Aorta (tissue), 5 donors: ENCODE measurements at regions of chr10 and their contacts with region 1.

Region 1: DNA sequence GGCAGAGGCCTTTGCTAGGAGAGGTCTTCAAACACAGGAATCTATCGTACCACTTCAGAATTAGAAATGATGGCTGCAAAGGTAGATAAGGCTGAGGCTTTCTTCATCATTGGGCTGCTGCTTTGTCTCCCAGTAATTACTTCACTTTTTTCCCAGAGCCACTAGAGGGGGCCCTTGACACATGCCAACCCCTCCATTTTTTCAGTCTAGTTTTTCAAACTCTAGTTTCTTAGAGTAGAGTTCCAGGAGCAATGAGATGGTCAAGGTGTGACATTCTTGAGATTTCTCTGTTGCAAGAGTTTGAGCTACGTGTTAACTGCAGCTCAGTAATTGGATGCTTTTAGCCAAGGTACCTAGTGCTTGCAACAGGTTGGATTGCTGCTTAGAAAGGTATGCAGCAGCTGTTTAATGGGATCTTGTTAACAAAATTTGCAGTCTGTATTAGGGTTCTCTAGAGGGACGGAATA is 33.8 kb upstream of the RBM20 start:
- DNase-seq: no peak
- ATAC-seq: peak; percentile 67
- H3K4me3 ChIP-seq: no peak overlapping the region
- H3K27ac ChIP-seq: no peak overlapping the region
- H3K4me1 ChIP-seq: no peaks in the 10 kb centered on the region
- H3K27me3 ChIP-seq: no peaks in the 10 kb centered on the region

Region 2: DNA sequence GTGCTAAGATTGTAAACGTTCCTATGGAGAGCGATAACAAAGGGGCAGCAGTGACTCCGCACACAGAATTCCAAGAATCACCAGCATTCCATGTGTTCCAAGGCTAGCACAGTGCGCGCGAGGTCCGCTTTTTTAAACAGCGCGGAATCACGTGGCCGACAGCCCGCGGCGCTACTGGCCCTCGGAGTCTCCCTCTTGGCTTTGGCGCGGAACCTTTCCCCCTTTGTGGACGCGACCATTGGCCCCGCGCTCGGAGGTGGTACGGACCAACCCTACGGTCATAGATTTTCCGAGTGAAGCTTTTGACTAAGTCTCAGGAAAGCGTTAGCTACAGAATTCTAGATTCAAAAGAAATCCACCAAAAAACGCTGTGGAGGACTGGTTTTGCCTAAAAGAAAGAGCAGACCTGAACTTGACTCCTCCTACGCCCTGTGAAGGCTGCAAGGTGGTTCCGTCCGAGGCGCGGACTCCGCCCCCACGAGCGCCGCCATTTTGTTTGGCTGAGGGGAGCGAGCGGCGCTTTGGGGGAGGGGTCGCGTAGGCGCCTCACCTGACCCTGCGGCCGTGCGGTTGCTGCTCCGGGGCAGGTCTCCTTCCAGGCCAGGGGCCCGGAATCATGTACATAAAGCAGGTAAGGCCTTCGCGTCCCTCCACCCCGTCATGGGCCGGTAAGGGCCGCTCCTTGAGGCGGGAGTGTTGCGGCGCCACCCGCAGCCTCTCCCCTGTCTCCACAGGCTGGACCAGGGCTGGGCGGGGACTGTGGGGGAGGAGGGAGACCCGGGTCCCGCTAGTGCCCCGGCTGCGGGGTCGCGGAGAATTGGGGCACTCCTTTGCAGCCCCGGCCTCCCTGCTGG is 42.9 kb before region 1 on chr10 and contains the start of gene SMC3:
- intact Hi-C with region 1: no loop called
- DNase-seq: peak; percentile 95 to 97
- ATAC-seq: peak; percentile 98
- H3K4me3 ChIP-seq: peak within 1 kb of the TSS; percentile 76 to 99
- H3K27ac ChIP-seq: peak within 1 kb of the TSS in 1 of 2 donors; percentile 12
- H3K4me1 ChIP-seq: peaks cover 0 to 2% of the 10 kb centered on the region in 2 donors
- H3K27me3 ChIP-seq: no peaks in the 10 kb centered on the region
- total RNA-seq, gene SMC3: 33.1 to 35.8 TPM

Region 3: DNA sequence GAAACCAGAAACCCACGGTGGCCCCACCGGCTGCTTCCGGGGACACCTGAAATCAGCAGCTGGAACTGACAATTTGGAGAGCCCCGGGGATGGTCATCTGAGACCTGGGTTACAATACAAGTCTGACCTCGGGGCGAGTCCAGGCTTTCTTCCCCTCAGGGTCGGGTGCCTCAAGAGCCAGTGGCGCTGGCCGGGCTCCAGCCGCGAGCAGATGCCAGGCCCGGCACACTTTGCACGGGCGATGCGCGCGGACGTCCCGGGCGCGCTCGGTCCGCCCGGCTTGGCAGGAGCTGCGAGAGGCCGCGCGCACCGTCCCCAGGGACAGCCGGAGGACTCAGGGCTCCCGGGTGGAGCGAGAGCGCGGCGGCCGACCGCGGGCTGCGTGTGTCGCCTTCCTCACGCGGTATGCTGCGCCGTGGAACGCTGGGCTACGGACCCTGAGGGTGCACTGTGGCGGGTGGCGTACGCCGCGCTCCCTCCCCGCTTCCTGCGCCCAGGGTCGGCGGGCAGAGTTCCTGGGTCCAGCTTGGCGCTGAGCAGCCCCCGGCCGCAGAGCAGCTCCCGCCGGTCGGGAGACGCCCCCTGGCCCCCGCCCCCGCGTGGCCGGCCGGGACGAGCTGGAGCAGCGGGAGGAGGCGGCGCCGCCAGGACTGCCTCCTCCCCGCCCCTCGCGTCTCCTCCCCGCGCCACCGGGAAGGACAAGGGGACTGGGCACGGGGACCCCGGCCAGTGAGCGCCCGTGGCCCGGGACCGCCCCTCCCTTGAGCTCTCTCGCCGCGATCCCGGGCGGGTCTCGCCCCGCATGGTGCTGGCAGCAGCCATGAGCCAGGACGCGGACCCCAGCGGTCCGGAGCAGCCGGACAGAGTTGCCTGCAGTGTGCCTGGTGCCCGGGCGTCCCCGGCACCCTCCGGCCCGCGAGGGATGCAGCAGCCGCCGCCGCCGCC is 33.6 kb after region 1 on chr10 and contains the start of gene RBM20:
- intact Hi-C with region 1: loop called in 1 of 2 experiments (anchors 1 kb)
- DNase-seq: peak; percentile 66 to 86
- ATAC-seq: peak; percentile 80
- H3K4me3 ChIP-seq: peak within 1 kb of the TSS; percentile 71 to 94
- H3K27ac ChIP-seq: peak within 1 kb of the TSS; percentile 38 to 68
- H3K4me1 ChIP-seq: no peaks in the 10 kb centered on the region
- H3K27me3 ChIP-seq: no peaks in the 10 kb centered on the region
- total RNA-seq, gene RBM20: 9.9 to 11.2 TPM

Region 4: GRCh38 chr10:110671788-110672579 is 61.6 kb after region 1 on chr10:
- intact Hi-C with region 1: loop called (anchors 2 kb)
- DNase-seq: peak; percentile 81 to 92
- ATAC-seq: peak; percentile 91
- H3K4me3 ChIP-seq: peak overlapping the region; percentile 84 to 85
- H3K27ac ChIP-seq: peak overlapping the region in 1 of 2 donors; percentile 78
- H3K4me1 ChIP-seq: peaks cover 2 to 6% of the 10 kb centered on the region in 2 donors
- H3K27me3 ChIP-seq: no peaks in the 10 kb centered on the region

Region 5: DNA sequence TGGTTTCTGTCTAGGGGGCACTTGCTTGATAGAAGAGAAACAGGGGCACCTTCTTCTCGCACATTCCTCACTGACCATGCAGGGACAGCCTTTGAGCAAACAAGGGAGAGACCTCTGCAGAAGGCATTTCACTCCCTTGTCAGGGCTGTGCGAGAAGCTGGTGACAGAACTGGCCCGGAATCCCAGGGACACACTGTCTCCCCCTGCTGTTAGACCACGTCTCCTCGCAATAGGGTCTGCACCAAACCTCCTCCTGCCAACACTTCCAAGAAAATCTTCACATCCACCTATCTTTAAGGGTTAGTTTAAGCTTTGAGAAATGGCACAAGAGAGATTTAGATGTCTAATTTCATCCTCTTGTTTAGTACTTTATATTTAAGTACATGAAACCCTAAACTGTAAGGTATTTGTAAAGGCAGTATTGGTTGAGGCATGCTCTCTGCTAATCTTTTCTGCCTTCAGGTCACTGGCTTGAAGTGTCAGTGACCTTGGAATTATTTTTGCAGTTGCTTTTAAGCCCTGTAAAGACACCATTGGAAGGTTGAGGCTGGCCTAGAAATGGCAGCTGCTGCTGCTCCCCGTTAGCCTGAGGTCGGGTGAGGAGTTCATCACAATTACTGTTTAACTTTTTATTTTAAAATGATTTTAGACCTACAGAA is 70.8 kb after region 1 on chr10:
- intact Hi-C with region 1: loop called in 1 of 2 experiments (anchors 1 kb)
- DNase-seq: no peak
- ATAC-seq: no peak
- H3K4me3 ChIP-seq: no peak overlapping the region
- H3K27ac ChIP-seq: no peak overlapping the region
- H3K4me1 ChIP-seq: no peaks in the 10 kb centered on the region
- H3K27me3 ChIP-seq: no peaks in the 10 kb centered on the region